ENCODE measurements at regions of chr10 and their contacts with region 1.

Region 1: GRCh38 chr10:129033790-129034272 is 433.2 kb upstream of the MGMT start:
- DNase-seq: no peak
- H3K4me3 ChIP-seq: no peak overlapping the region
- H3K27ac ChIP-seq: no peak overlapping the region
- H3K4me1 ChIP-seq: no peaks in the 10 kb centered on the region
- H3K27me3 ChIP-seq: peaks cover 0 to 35% of the 10 kb centered on the region in 2 donors
- CTCF ChIP-seq: no peak
- POLR2A ChIP-seq: no peak

Region 2: GRCh38 chr10:128211953-128212727 is 821.7 kb before region 1 on chr10:
- intact Hi-C with region 1: no loop called
- DNase-seq: peak; percentile 73 to 77
- H3K4me3 ChIP-seq: peak overlapping the region in 2 of 3 donors; percentile 8 to 30
- H3K27ac ChIP-seq: no peak overlapping the region
- H3K4me1 ChIP-seq: no peaks in the 10 kb centered on the region
- H3K27me3 ChIP-seq: no peaks in the 10 kb centered on the region
- CTCF ChIP-seq: peak; percentile 49 to 86 (median 79)
- POLR2A ChIP-seq: no peak

Region 3: GRCh38 chr10:128896116-128896795 is 137.6 kb before region 1 on chr10:
- intact Hi-C with region 1: no loop called
- DNase-seq: no peak
- H3K4me3 ChIP-seq: no peak overlapping the region
- H3K27ac ChIP-seq: peak overlapping the region in 1 of 2 donors; percentile 71
- H3K4me1 ChIP-seq: no peaks in the 10 kb centered on the region
- H3K27me3 ChIP-seq: no peaks in the 10 kb centered on the region
- CTCF ChIP-seq: no peak
- POLR2A ChIP-seq: no peak

Region 4: GRCh38 chr10:129963641-129964501 is 930.0 kb after region 1 on chr10 and contains the start of gene EBF3:
- intact Hi-C with region 1: loop called (anchors 2 kb)
- DNase-seq: peak in 1 of 2 donors; percentile 37
- H3K4me3 ChIP-seq: peak within 1 kb of the TSS; percentile 55 to 86 (median 79)
- H3K27ac ChIP-seq: peak within 1 kb of the TSS; percentile 7 to 85
- H3K4me1 ChIP-seq: peaks cover 0 to under 1% of the 10 kb centered on the region in 2 donors
- H3K27me3 ChIP-seq: peaks cover 25 to 95% of the 10 kb centered on the region in 2 donors
- CTCF ChIP-seq: no peak
- POLR2A ChIP-seq: no peak
- total RNA-seq, gene EBF3: 4.2 to 28.0 (median 6.6) TPM

Measured in breast epithelium (tissue), 4 donors.